Posterior cingulate gyrus (tissue), 11 donors: ENCODE measurements at regions of chr2 and their contacts with region 1.

Region 1: GRCh38 chr2:219388127-219388844 is 574 bp upstream of the DNPEP start:
- DNase-seq: peak; percentile 95 to 100 (median 98)

Region 2: GRCh38 chr2:219229305-219230058 is 158.8 kb before region 1 on chr2 and contains the starts of genes ANKZF1 and ATG9A:
- intact Hi-C with region 1: loop called (anchors 10 kb)
- DNase-seq: peak; percentile 98 to 100 (median 100)

Region 3: GRCh38 chr2:219278655-219279516 is 109.4 kb before region 1 on chr2 and contains the start of gene DNAJB2:
- intact Hi-C with region 1: loop called (anchors 5 kb)
- DNase-seq: peak; percentile 98 to 100 (median 99)